Activated B cell treated with CpG ODN at 0.5 μM for 24 hours (primary cell): ENCODE measurements at regions of chr19 and their contacts with region 1.

Region 1: GRCh38 chr19:51473009-51473707 is 5.2 kb upstream of the CEACAM18 start:
- DNase-seq: peak; percentile 56
- ATAC-seq: peak; percentile 67
- H3K4me3 Mint-ChIP-seq: no peak overlapping the region
- H3K27ac Mint-ChIP-seq: no peak overlapping the region
- H3K4me1 Mint-ChIP-seq: peaks cover 10% of the 10 kb centered on the region
- H3K27me3 Mint-ChIP-seq: peaks cover 5% of the 10 kb centered on the region
- CTCF ChIP-seq: peak; percentile 40

Region 2: DNA sequence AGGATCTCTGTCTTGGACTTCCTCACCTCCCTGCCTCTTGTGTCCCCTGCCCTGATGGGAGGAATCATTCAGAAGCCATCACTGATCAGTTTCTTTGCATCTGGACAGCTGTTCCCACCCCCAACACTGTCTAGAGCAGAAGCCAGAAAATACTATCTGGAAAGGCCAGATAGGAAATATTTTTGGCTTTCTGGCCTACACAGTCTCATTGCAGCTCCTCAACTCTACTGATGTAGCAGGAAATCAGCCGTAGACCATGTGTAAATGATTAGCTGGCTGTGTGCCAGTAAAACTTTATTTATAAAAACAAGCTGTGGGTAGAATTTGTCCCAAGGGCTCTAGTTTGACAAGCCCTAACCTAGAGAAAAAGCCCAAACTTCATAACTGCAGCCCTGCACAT is 325.5 kb before region 1 on chr19:
- CTCF ChIA-PET with region 1: no interaction called
- POLR2A ChIA-PET with region 1: no interaction called
- intact Hi-C with region 1: no loop called
- DNase-seq: no peak
- ATAC-seq: no peak
- H3K4me3 Mint-ChIP-seq: no peak overlapping the region
- H3K27ac Mint-ChIP-seq: no peak overlapping the region
- H3K4me1 Mint-ChIP-seq: peaks cover 5% of the 10 kb centered on the region
- H3K27me3 Mint-ChIP-seq: peaks cover 39% of the 10 kb centered on the region
- CTCF ChIP-seq: no peak

Region 3: GRCh38 chr19:51514866-51515481 is 41.8 kb after region 1 on chr19:
- CTCF ChIA-PET with region 1: interaction called, 17 read pairs
- POLR2A ChIA-PET with region 1: no interaction called
- intact Hi-C with region 1: loop called (anchors 1 kb)
- DNase-seq: no peak
- ATAC-seq: no peak
- H3K4me3 Mint-ChIP-seq: no peak overlapping the region
- H3K27ac Mint-ChIP-seq: no peak overlapping the region
- H3K4me1 Mint-ChIP-seq: peaks cover 7% of the 10 kb centered on the region
- H3K27me3 Mint-ChIP-seq: peaks cover 2% of the 10 kb centered on the region
- CTCF ChIP-seq: peak; percentile 72

Region 4: GRCh38 chr19:51637362-51637978 is 164.3 kb after region 1 on chr19:
- CTCF ChIA-PET with region 1: interaction called, 14 read pairs
- POLR2A ChIA-PET with region 1: no interaction called
- intact Hi-C with region 1: no loop called
- DNase-seq: no peak
- ATAC-seq: no peak
- H3K4me3 Mint-ChIP-seq: no peak overlapping the region
- H3K27ac Mint-ChIP-seq: no peak overlapping the region
- H3K4me1 Mint-ChIP-seq: peaks cover 25% of the 10 kb centered on the region
- H3K27me3 Mint-ChIP-seq: no peaks in the 10 kb centered on the region
- CTCF ChIP-seq: no peak

Region 5: DNA sequence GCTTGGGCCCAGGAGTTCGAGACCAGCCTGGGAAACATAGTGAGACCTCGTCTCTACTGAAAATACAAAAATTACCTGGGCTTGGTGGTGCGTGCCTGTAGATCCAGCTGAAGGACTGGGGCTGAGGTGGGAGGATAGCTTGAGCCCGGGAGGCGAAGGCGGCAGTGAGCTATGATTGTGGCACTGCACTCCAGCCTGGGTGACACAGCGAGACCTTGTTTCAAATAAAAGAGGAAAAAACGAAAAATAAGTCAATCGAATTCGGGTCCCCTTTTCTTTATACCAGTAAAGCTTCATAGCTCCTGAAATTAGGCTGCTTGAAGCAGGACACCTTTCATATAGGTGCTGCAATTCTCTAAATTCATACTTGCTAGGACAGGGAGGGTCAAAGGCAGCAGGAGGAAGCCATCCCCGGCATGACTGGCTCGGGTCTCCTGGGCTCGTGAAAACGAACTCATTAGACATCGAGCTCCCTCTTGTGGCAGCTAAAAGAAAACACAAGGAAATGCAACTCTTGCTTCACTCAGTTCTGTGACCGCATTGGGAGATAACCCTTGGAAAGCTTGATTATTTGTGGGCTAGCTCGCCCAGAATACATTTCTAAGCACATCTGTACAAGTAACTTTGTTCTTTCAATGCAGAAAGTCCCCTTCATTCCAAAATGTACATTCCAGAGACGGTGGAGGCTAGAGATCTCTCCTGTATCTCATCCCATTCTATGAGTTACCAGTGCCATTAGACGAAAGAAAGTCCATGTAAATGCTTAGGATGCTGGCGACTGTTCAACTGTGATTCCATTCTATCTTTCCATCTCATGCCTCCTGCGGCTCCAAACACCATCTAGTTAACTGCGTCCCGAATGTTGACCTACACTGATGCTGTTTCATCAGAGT is 304.7 kb after region 1 on chr19:
- CTCF ChIA-PET with region 1: interaction called, 11 read pairs
- POLR2A ChIA-PET with region 1: no interaction called
- intact Hi-C with region 1: loop called (anchors 2 kb)
- DNase-seq: no peak
- ATAC-seq: peak; percentile 61
- H3K4me3 Mint-ChIP-seq: no peak overlapping the region
- H3K27ac Mint-ChIP-seq: no peak overlapping the region
- H3K4me1 Mint-ChIP-seq: peaks cover 4% of the 10 kb centered on the region
- H3K27me3 Mint-ChIP-seq: peaks cover 56% of the 10 kb centered on the region
- CTCF ChIP-seq: no peak